Panc1 (cell line): ENCODE measurements at regions of chr16 and their contacts with region 1.

Region 1: DNA sequence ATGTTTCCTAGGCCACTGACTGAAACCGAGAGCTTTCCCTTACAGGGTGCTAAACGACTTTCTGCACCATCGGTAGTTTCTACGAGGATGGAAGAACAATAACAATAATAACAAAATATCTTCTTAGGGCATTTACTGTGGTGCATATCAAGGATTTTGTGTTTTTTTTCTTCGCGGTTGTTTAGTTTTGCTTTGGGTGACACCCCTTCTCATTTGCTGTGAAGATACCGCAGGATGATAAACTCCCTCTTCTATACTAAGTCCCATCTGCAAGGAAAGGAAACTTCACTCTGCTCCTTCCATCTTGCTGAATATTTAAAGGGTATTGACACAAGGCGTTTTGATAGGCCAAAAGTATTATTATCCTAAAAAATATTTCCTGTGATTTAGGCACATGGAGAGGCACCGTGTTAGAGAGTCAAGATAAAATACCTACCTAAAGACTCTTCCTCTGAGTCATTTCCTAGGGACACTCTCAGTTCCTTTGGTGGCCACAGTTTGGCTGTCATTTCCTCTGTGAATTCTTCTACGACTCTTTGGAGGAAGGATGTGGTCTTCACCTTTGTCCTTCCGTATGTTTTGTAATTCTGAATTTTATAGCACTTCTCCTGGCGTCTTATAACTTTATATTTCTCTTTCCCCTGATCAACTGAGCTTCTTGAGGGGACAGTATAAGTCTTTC is 318.8 kb downstream of the CDH13 start:
- DNase-seq: no peak
- ATAC-seq: no peak
- H3K4me3 ChIP-seq: no peak overlapping the region
- H3K27ac ChIP-seq: no peak overlapping the region
- H3K4me1 ChIP-seq: no peaks in the 10 kb centered on the region
- H3K27me3 ChIP-seq: no peaks in the 10 kb centered on the region
- CTCF ChIP-seq: no peak

Region 2: DNA sequence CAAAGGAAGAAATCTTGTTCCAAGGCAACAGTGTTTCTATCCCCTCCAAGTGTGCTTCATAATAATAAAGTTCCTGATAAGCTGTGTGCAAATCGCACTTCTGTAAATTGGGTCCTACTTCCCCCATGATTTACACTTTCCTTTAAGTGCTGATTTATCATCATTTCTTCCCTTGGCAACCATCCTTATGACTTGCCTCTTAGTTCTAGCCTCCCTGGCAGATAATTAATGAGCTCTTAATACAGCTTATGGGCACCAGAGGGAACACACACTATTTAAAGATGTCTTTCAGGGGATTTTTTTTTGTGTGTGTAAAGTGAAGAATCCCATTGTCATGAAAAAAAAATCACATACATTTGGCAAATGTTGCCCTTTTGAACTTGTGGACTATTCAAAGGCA is 673.9 kb before region 1 on chr16:
- CTCF ChIA-PET with region 1: no interaction called
- POLR2A ChIA-PET with region 1: no interaction called
- in situ Hi-C with region 1: no loop called
- intact Hi-C with region 1: loop called (anchors 10 kb)
- DNase-seq: no peak
- ATAC-seq: no peak
- H3K4me3 ChIP-seq: no peak overlapping the region
- H3K27ac ChIP-seq: no peak overlapping the region
- H3K4me1 ChIP-seq: no peaks in the 10 kb centered on the region
- H3K27me3 ChIP-seq: no peaks in the 10 kb centered on the region; the same call in 1 of the 2 replicates
- CTCF ChIP-seq: no peak

Region 3: DNA sequence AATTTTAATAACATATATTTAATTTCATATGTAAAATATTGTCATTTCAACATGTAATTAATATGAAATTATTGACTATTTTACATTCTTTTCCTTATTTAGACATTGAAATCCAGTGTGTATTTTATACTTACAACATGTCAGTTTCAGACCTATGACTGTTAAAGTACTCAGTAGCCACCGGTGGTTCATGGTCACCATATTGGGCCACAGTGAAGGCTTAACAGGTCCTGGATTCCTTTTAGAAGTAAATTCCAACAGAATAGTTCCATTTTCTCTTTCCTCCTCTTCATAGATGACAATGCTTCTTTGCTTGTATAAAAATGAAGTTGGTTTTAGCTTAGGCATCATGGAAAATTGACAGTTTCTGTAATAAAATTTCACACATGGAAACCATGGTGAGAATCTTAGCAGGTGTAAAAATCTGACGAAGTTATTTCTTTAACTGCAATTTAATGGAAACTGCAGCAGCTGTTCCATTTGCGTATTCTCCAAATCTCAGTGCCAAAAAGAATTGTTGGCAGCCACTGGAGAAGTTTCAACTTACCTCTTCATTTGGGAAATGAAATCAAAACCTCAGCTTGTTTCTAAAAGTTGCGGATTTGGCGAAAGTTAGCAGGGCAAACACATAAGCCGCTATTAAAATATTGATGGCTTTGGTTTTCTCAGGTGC is 87.7 kb before region 1 on chr16:
- CTCF ChIA-PET with region 1: no interaction called
- POLR2A ChIA-PET with region 1: no interaction called
- in situ Hi-C with region 1: no loop called
- intact Hi-C with region 1: no loop called
- DNase-seq: no peak
- ATAC-seq: no peak
- H3K4me3 ChIP-seq: no peak overlapping the region
- H3K27ac ChIP-seq: no peak overlapping the region
- H3K4me1 ChIP-seq: no peaks in the 10 kb centered on the region
- H3K27me3 ChIP-seq: no peaks in the 10 kb centered on the region
- CTCF ChIP-seq: no peak